HEK293 (cell line): ENCODE measurements at regions of chr22 and their contacts with region 1.

Region 1: DNA sequence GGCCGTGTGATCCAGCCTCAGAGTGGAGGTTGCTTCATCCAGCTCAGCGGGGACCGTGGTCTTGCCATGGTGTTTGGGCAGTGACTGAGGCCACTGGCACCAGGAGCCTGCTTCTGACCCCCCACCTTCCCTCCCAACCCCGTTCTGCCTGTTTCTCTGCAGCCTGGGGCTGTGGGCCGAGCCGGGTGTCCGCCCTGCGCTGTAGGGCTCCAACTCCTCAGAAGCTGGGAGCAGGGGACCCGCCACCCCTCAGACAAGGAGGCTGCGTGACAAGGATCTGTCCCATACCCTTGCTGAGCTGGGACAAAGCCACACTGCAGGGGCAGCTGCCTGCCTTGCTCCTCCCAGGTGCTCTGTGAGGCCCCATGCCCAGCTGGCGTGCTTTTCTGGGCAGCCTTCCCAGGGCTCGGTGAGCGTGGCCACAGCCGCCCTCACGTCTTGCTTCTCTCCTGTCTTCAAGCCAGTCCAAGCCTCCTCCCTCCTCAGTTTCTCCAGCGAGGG is 11.7 kb upstream of the ARFGAP3 start:
- H3K4me3 ChIP-seq: no peak overlapping the region
- H3K27ac ChIP-seq: no peak overlapping the region
- H3K4me1 ChIP-seq: no peaks in the 10 kb centered on the region
- CTCF ChIP-seq: no peak

Region 2: DNA sequence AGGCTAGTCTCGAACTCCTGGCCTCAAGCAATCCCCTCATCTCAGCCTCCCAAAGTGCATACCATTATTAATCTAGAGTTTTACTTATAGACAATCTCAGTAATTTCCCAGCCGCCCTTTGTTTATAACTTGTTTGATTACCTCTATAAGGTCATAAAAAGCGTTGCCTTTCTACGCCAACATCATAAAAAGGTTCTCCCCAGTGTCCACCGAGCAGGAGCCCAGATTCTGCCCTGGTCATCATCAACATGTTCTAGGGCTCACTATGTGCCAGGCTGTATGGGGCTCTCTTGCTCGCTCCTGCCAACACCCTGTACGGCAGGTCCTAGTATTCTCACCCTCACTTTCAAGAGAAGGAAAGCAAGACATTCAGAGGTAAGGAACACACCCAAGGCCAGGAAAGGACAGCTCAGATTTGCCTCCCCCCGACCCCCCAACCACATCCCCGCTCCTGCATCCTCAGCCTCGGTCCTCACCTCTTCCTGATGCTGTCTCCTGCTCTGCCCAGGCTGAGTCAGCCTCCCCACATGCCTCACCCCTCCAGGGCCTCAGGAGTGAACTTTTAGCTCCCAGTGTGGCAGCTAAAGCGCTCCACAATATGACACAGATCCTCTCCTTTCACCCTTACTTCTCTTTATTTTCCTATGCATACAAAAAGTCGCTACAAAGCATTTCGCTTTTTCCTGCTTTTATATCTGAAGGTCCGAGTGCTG is 26.0 kb before region 1 on chr22:
- CTCF ChIA-PET with region 1: no interaction called
- POLR2A ChIA-PET with region 1: no interaction called
- H3K4me3 ChIP-seq: no peak overlapping the region
- H3K27ac ChIP-seq: no peak overlapping the region
- H3K4me1 ChIP-seq: no peaks in the 10 kb centered on the region
- CTCF ChIP-seq: no peak

Region 3: GRCh38 chr22:42856865-42857704 is 11.7 kb before region 1 on chr22 and contains the start of gene ARFGAP3:
- CTCF ChIA-PET with region 1: interaction called, 61 read pairs
- POLR2A ChIA-PET with region 1: interaction called, 5 read pairs
- H3K4me3 ChIP-seq: peak within 1 kb of the TSS; percentile 76
- H3K27ac ChIP-seq: peak within 1 kb of the TSS; percentile 81
- H3K4me1 ChIP-seq: peaks cover 14% of the 10 kb centered on the region
- CTCF ChIP-seq: no peak

Region 4: DNA sequence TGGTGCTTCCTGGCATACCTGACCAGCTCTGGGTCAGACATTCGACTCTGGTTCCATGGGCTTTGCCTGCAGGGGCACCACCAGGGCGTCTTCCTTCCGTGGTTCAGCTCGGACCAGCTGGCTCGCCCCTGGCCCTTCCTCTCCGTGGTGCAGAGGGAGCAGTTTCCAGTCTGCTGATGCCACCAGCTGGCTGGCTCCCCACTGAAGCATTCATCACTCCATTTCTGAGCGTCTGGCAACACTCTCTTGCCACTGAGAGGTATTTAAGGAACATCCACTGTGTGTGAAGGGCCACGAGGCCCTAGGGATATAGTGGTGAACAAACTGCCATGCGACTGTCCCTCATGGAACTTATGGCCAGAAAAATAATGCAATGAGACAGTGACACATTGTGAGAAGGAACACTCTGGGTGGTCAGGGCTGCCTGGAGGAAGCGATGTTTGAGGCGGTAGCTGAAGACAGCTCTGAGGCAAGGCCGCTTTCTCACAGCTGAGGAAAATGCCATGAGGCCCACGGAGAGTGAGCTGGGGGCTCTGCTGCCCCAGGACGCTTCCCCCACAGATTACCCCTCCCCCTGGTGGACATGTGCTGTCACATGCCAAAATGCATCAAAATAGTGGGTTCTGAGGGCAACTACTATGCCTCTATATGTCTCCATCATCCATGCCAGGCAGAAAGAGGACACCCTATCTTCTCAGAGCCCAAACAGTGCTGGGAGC is 33.1 kb after region 1 on chr22:
- CTCF ChIA-PET with region 1: interaction called, 16 read pairs
- POLR2A ChIA-PET with region 1: no interaction called
- H3K4me3 ChIP-seq: no peak overlapping the region
- H3K27ac ChIP-seq: no peak overlapping the region
- H3K4me1 ChIP-seq: 0 out of 2 replicates have a peak, but pooled peaks cover 2% of the 10 kb centered on the region
- CTCF ChIP-seq: no peak

Region 5: GRCh38 chr22:43001271-43002201 is 132.7 kb after region 1 on chr22:
- CTCF ChIA-PET with region 1: interaction called, 10 read pairs
- POLR2A ChIA-PET with region 1: no interaction called
- H3K4me3 ChIP-seq: no peak overlapping the region
- H3K27ac ChIP-seq: no peak overlapping the region
- H3K4me1 ChIP-seq: peaks cover 29% of the 10 kb centered on the region
- CTCF ChIP-seq: no peak